Left ventricle myocardium inferior (tissue), 1 donor: ENCODE measurements at regions of chr12 and their contacts with region 1.

Region 1: DNA sequence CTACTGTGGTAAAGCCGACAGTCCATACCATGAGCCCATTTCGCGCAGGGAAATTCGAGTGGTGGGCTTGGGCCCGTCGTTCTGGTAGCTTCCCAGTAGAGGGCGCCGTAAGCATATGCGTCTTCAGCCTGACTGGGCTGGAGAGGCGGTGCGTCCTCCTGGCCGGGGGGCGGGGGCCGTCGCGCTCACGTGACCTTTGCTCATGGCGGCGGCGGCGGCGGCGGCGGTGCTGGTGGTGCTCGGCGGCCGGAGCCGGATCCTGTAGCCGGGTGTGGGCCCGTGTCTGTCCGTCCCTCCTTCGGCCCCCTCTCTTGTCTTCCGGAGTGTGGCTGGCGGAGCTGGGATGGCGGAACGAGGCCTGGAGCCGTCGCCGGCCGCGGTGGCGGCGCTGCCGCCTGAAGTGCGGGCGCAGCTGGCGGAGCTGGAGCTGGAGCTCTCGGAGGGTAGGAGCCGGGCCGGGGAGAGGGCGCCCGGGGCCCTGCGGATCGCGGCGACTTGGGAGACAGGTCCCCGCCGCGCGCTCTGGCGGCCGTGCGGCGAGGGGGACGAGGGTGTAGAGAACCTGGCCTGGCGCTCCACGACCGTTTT is at the start of gene DIP2B:
- DNase-seq: peak; percentile 96
- H3K4me3 ChIP-seq: peak within 1 kb of the TSS; percentile 93
- H3K27ac ChIP-seq: peak within 1 kb of the TSS; percentile 97
- H3K4me1 ChIP-seq: peaks cover 54% of the 10 kb centered on the region
- H3K27me3 ChIP-seq: no peaks in the 10 kb centered on the region
- CTCF ChIP-seq: peak; percentile 94
- total RNA-seq, gene DIP2B: 13.2 TPM

Region 2: DNA sequence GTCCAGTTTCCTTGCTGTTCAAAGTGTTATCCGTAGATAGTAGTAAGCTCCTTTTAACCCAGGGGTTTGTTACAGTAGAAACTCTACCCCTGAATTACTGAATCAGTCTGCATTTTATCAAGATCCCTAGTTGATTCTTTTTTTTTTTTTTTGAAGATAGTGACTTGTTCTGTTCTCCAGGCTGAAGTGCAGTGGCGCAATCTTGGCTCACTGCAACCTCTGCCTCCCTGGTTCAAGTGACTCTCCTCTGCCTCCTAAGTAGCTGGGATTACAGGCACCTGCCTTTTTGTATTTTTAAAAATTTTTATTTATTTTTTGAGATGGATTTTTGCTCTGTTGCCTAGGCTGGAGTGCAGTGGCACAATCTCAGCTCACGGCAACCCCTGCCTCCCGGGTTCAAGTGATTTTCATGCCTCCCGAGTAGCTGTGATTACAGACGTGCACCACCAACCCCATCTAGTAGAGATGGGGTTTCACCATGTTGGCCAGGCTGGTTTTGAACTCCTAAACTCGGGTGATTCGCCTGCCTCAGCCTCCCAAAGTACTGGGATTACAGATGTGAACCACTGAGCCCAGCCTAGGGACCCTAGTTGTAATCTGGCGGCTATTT is 93.7 kb before region 1 on chr12:
- intact Hi-C with region 1: no loop called
- DNase-seq: no peak
- H3K4me3 ChIP-seq: no peak overlapping the region
- H3K27ac ChIP-seq: no peak overlapping the region
- H3K4me1 ChIP-seq: peaks cover 68% of the 10 kb centered on the region
- H3K27me3 ChIP-seq: no peaks in the 10 kb centered on the region
- CTCF ChIP-seq: no peak

Region 3: GRCh38 chr12:50467439-50467838 is 37.5 kb before region 1 on chr12:
- intact Hi-C with region 1: no loop called
- DNase-seq: no peak
- H3K4me3 ChIP-seq: no peak overlapping the region
- H3K27ac ChIP-seq: no peak overlapping the region
- H3K4me1 ChIP-seq: peaks cover 9% of the 10 kb centered on the region
- H3K27me3 ChIP-seq: no peaks in the 10 kb centered on the region
- CTCF ChIP-seq: no peak

Region 4: DNA sequence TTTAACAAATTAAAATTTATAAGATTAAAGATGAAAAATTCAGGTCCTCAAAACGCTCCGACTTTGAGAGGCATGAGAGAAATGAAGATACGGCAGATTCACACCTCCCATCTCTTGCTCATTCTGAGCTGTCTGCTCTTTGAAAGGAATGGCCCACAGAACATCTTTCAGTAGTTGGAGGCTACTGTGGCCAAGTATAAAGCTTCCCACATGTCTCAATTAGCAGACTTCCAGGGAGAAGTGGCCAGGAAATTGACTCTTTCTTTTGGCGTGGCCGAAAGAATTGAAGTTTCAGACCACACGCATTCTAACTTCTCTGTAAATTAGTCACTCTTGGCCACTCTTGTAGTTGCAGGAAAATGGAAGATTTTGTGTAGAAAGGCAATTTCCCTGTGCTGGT is 129.1 kb after region 1 on chr12:
- intact Hi-C with region 1: loop called (anchors 2 kb)
- DNase-seq: no peak
- H3K4me3 ChIP-seq: no peak overlapping the region
- H3K27ac ChIP-seq: peak overlapping the region; percentile 17
- H3K4me1 ChIP-seq: peaks cover 50% of the 10 kb centered on the region
- H3K27me3 ChIP-seq: no peaks in the 10 kb centered on the region
- CTCF ChIP-seq: no peak

Region 5: GRCh38 chr12:51172515-51173431 is 667.9 kb after region 1 on chr12 and contains the start of gene TFCP2:
- intact Hi-C with region 1: no loop called
- DNase-seq: peak; percentile 97
- H3K4me3 ChIP-seq: peak within 1 kb of the TSS; percentile 91
- H3K27ac ChIP-seq: peak within 1 kb of the TSS; percentile 94
- H3K4me1 ChIP-seq: peaks cover 39% of the 10 kb centered on the region
- H3K27me3 ChIP-seq: no peaks in the 10 kb centered on the region
- CTCF ChIP-seq: no peak
- total RNA-seq, gene TFCP2: 22.8 TPM